ENCODE measurements at regions of chr13 and their contacts with region 1.

Region 1: DNA sequence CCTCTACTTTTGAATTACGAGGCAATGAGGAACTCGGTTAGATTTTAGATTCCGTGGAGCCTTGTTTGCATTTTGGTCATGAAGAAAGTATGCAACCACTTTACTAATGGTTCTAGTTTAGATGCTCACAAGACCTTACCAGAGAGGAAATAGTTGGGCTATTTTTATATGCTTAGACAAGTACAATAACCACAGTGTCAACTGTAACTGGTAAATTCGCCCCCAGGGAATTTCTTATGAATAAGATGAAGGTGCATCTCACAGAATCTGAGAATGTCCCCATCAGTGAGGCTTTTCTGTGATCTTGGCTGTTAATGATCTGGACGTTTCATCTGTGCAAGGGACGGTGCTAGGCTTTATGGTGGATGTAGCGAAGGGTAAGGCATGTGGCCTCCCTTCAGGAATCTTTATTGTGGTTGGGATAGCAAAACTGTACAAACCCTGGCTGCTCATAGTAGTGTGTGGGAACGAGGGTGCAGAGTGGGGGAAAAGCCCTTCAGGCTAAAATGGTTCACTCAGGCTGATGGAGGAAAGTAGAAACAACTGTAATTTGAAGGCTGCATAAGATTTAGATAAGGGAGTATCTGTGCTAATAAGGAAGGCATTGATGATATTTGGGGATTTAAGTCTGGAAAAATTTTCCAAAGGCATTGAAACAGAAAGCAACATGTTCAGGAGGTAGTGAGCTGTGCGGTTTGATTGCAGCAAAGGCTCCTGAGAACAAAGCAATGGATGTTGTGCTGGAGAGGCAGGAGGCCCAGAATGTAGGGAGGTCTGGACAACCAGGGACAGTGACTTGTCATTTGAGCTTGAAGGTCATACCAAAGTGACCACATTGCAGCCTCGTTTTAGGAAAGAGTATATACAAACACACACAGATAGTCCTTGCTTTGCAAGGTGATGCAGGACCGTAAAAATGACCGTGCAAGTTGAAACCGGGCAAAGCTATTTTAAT is 28.4 kb downstream of the UBAC2 start:
- DNase-seq: peak in 2 of 9 experiments; percentile 60 to 76
- ATAC-seq: peak; percentile 48
- H3K4me3 ChIP-seq: peak overlapping the region; percentile 17 to 31
- H3K4me3 Mint-ChIP-seq: peak overlapping the region; percentile 68
- H3K27ac ChIP-seq: peak overlapping the region in 1 of 2 experiments; percentile 69
- H3K27ac Mint-ChIP-seq: peak overlapping the region; percentile 87
- H3K4me1 ChIP-seq: peaks cover 85% of the 10 kb centered on the region
- H3K4me1 Mint-ChIP-seq: peaks cover 78% of the 10 kb centered on the region
- H3K27me3 ChIP-seq: no peaks in the 10 kb centered on the region
- H3K27me3 Mint-ChIP-seq: no peaks in the 10 kb centered on the region
- CTCF ChIP-seq: no peak

Region 2: DNA sequence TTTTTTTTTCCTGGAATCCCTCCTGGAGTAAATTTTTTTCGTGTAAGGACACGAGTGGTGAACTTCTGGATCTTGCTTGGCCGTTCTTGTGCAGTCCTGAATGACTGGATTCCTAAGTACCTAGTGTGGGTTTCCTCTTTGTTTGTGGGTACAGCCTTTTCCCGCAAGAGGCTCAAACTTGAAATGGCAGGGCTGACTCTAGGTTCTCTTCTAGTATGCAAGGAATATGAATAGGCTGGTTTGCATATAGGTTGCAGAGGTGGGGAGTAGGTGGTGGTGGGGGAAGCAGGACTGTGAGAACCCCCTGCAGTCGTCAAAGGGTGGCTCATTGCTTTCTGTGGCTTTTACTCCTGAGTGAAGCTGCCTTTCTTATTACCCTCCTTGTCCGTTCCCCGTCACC is 14.8 kb before region 1 on chr13:
- CTCF ChIA-PET with region 1: interaction called, 4 read pairs
- POLR2A ChIA-PET with region 1: interaction called, 7 read pairs
- intact Hi-C with region 1: loop called in 1 of 2 experiments (anchors 1 kb)
- DNase-seq: peak in 5 of 9 experiments; percentile 33 to 72 (median 60)
- ATAC-seq: peak; percentile 37
- H3K4me3 ChIP-seq: peak overlapping the region; percentile 9 to 65
- H3K4me3 Mint-ChIP-seq: peak overlapping the region; percentile 88
- H3K27ac ChIP-seq: peak overlapping the region; percentile 3 to 78
- H3K27ac Mint-ChIP-seq: peak overlapping the region; percentile 99
- H3K4me1 ChIP-seq: peaks cover 76% of the 10 kb centered on the region
- H3K4me1 Mint-ChIP-seq: peaks cover 81% of the 10 kb centered on the region
- H3K27me3 ChIP-seq: no peaks in the 10 kb centered on the region
- H3K27me3 Mint-ChIP-seq: no peaks in the 10 kb centered on the region
- CTCF ChIP-seq: no peak

Region 3: DNA sequence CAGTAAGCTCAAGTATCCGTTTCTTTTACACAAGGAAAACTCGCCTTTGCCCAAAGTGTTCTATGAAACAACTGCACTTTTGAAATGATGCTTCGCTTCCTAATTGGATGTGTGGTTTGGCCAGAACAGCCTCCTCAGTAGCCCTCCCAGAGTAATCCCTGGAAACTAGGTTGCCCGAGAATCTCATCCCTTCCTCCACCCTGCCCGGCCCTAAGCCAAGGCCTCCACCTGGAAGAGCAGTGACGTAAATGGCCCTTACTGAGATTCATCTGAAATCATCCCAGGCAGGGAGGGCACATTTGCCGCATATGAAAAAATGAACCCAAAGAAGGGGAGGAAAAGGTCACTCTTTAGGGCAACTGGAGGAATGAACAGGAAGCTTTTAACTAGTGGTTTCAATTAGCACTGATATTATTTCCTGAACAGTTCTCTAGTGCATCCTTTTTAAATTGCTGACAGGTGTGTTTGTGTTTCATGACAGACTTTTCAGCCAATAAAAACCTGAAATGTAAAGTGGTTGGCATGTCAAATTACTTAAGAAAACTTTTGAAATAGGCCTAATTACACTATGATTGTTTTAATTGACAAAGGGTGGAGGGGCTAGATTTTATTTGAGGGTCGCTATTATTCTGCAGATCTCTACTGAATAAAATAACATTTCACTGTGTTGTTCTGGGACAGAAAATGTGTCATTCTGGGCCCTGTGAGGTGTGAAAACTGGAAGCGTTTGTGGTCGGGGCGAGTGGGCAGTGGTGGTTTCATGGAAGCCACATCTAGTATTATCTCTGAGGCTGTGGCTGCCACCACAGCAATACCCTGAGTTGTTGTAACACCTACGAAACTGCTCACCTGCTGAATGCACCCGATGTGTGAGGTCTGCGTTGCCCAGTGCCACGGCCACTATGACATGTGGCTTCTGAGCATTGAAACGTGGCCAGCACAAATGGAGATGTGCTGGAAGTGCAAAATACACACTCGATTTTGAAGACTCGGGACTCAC is 630.5 kb after region 1 on chr13:
- CTCF ChIA-PET with region 1: no interaction called
- POLR2A ChIA-PET with region 1: no interaction called
- intact Hi-C with region 1: loop called in 1 of 2 experiments (anchors 5 kb)
- DNase-seq: peak in 5 of 9 experiments; percentile 3 to 60 (median 30)
- ATAC-seq: peak; percentile 34
- H3K4me3 ChIP-seq: no peak overlapping the region
- H3K4me3 Mint-ChIP-seq: no peak overlapping the region
- H3K27ac ChIP-seq: no peak overlapping the region
- H3K27ac Mint-ChIP-seq: no peak overlapping the region
- H3K4me1 ChIP-seq: no peaks in the 10 kb centered on the region
- H3K4me1 Mint-ChIP-seq: peaks cover 17% of the 10 kb centered on the region
- H3K27me3 ChIP-seq: no peaks in the 10 kb centered on the region
- H3K27me3 Mint-ChIP-seq: no peaks in the 10 kb centered on the region
- CTCF ChIP-seq: no peak

Measured in CD8-positive, alpha-beta T cell (primary cell).